ENCODE measurements at regions of chr9 and their contacts with region 1.

Region 1: GRCh38 chr9:107447810-107448209 is 41.8 kb downstream of the KLF4 start:
- DNase-seq: no peak
- ATAC-seq: no peak
- H3K4me3 ChIP-seq: no peak overlapping the region
- H3K27ac ChIP-seq: no peak overlapping the region
- H3K4me1 ChIP-seq: no peaks in the 10 kb centered on the region
- H3K27me3 ChIP-seq: peaks cover 2% of the 10 kb centered on the region; the same call in 1 of the 2 replicates
- CTCF ChIP-seq: no peak
- POLR2A ChIP-seq: no peak
- RAD21 ChIP-seq: no peak

Region 2: GRCh38 chr9:107340920-107341632 is 106.7 kb before region 1 on chr9:
- CTCF ChIA-PET with region 1: no interaction called
- POLR2A ChIA-PET with region 1: no interaction called
- dilution Hi-C with region 1: no loop called
- in situ Hi-C with region 1: no loop called
- intact Hi-C with region 1: no loop called
- DNase-seq: peak; percentile 60
- ATAC-seq: peak; percentile 50; the same call in 1 of the 2 replicates
- H3K4me3 ChIP-seq: no peak overlapping the region
- H3K27ac ChIP-seq: no peak overlapping the region
- H3K4me1 ChIP-seq: peaks cover 3% of the 10 kb centered on the region; the same call in 1 of the 2 replicates
- H3K27me3 ChIP-seq: no peaks in the 10 kb centered on the region
- CTCF ChIP-seq: peak; percentile 79
- POLR2A ChIP-seq: no peak
- RAD21 ChIP-seq: peak; percentile 68

Region 3: GRCh38 chr9:107465467-107466451 is 17.9 kb after region 1 on chr9:
- CTCF ChIA-PET with region 1: interaction called, 5 read pairs
- POLR2A ChIA-PET with region 1: interaction called, 10 read pairs
- dilution Hi-C with region 1: no loop called
- in situ Hi-C with region 1: no loop called
- intact Hi-C with region 1: no loop called
- DNase-seq: peak; percentile 33
- ATAC-seq: peak; percentile 99
- H3K4me3 ChIP-seq: peak overlapping the region; percentile 48
- H3K27ac ChIP-seq: no peak overlapping the region
- H3K4me1 ChIP-seq: no peaks in the 10 kb centered on the region
- H3K27me3 ChIP-seq: peaks cover 4% of the 10 kb centered on the region
- CTCF ChIP-seq: peak; percentile 83
- POLR2A ChIP-seq: no peak
- RAD21 ChIP-seq: peak; percentile 85

Measured in IMR-90 (cell line).